K562 (cell line): ENCODE measurements at regions of chr6 and their contacts with region 1.

Region 1: DNA sequence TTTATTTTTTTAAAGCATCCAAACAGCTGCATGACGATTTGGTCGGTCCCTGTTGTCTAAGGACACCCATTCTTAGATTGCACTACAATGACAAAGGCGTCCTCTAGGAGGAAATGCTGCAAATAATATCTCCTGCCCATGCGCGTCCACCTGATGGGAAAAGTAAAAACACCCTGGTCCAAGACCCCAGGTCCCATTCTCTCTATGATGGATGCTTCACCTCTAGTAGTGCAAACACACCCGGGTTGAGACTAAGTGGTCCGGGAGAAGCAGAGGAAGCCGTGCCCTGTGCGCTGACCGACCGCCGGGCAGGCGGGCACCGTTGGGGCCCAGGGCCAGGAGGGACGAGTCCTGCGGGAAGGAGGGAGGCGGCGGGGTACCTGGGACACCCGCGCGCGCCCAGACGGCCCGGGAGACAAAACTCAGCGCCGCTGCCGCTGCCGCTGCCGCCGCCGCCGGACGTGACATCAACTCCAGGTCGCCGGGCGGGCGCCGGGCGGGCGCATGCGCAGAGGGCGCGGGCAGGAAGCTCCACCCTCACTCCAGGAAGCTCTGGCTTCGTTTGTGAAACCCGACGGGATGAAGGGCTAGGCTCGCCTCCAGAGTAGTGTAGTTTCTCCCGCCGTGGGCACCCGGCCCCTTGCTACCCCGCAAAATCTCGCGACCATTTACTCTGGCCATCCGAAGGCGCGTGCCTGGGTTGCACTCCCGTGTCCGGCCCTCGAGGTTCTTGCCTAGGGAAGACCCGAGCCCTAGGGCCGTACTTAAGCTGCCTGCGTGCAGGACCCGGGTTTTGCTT is at the start of gene TBC1D7:
- DNase-seq: peak; percentile 96 to 98 (median 98)
- ATAC-seq: peak; percentile 88
- H3K4me3 ChIP-seq: peak within 1 kb of the TSS; percentile 87
- H3K27ac ChIP-seq: peak within 1 kb of the TSS; percentile 89
- H3K4me1 ChIP-seq: peaks cover 11 to 22% of the 10 kb centered on the region in 2 experiments
- H3K27me3 ChIP-seq: no peaks in the 10 kb centered on the region; a peak in 1 of 5 replicates
- CTCF ChIP-seq: peak; percentile 15 to 37 (median 31); a peak in 3 of 6 replicates
- EP300 ChIP-seq: no peak
- POLR2A ChIP-seq: peak; percentile 93
- RAD21 ChIP-seq: peak in 1 of 2 experiments; percentile 24; a peak in 3 of 4 replicates
- polyA plus RNA-seq, gene TBC1D7: 74.5 to 86.8 TPM

Region 2: DNA sequence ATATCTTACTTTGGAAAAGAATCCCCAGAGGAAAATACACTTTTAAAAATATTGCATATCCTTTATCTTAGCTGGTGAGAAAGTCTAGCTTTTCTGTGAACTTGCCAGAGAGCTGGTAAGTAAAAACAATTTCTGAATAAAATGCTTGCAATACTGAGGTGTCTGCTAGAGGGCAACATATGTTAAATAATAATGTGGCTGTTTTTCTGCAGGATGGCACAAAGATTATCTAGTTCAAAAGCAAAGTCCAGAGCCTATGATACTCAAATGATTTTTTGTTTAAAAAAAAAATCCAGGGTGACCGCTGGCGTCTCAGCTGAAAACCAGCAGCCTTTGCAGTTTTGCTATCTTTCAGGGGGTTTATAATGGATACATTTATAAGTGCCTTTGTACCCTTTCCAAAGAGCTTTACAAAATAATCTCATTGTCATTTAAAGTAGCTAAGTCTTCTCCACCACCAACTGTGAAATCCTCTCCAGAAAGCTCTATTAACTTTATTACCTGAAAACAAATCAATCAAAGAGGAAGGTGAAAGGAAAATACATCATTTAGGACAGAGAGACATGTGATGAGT is 416.8 kb before region 1 on chr6:
- CTCF ChIA-PET with region 1: interaction called, 6 read pairs
- POLR2A ChIA-PET with region 1: interaction called, 4 read pairs
- in situ Hi-C with region 1: loop called (anchors 5 kb)
- intact Hi-C with region 1: loop called (anchors 1 kb)
- DNase-seq: peak; percentile 17 to 21 (median 19)
- ATAC-seq: no peak
- H3K4me3 ChIP-seq: no peak overlapping the region
- H3K27ac ChIP-seq: no peak overlapping the region
- H3K4me1 ChIP-seq: no peaks in the 10 kb centered on the region
- H3K27me3 ChIP-seq: peaks cover 0 to 8% of the 10 kb centered on the region in 2 experiments; a peak in 3 of 5 replicates
- CTCF ChIP-seq: peak; percentile 38 to 71 (median 47); a peak in 5 of 6 replicates
- EP300 ChIP-seq: no peak
- POLR2A ChIP-seq: no peak
- RAD21 ChIP-seq: peak; percentile 70

Region 3: DNA sequence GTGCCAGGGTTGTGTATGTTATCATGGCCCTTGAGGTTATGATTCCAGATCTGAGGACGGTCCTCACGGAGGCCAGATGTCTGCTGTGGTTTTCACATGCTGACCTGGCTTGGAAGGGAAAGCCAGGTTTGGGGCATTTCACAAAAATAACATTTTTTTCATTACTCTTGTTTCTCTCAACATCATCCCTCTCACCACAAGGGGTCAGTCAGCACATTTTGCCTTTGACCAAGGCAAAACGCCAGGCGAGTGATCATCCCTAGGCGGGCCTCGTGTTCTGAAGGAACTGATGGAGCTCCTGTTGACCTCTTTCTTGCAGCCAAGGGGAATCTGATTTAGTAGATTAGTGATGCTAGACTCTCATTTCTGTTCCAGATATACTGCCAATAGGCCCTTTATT is 133.4 kb before region 1 on chr6:
- CTCF ChIA-PET with region 1: interaction called, 21 read pairs
- POLR2A ChIA-PET with region 1: interaction called, 3 read pairs
- in situ Hi-C with region 1: loop called (anchors 5 kb)
- intact Hi-C with region 1: loop called (anchors 1 kb)
- DNase-seq: peak; percentile 58 to 84 (median 70)
- ATAC-seq: peak; percentile 90
- H3K4me3 ChIP-seq: no peak overlapping the region
- H3K27ac ChIP-seq: no peak overlapping the region
- H3K4me1 ChIP-seq: no peaks in the 10 kb centered on the region
- H3K27me3 ChIP-seq: peaks cover 12 to 17% of the 10 kb centered on the region in 2 experiments
- CTCF ChIP-seq: peak; percentile 83 to 90 (median 83)
- EP300 ChIP-seq: no peak
- POLR2A ChIP-seq: no peak
- RAD21 ChIP-seq: peak; percentile 86 to 89

Region 4: DNA sequence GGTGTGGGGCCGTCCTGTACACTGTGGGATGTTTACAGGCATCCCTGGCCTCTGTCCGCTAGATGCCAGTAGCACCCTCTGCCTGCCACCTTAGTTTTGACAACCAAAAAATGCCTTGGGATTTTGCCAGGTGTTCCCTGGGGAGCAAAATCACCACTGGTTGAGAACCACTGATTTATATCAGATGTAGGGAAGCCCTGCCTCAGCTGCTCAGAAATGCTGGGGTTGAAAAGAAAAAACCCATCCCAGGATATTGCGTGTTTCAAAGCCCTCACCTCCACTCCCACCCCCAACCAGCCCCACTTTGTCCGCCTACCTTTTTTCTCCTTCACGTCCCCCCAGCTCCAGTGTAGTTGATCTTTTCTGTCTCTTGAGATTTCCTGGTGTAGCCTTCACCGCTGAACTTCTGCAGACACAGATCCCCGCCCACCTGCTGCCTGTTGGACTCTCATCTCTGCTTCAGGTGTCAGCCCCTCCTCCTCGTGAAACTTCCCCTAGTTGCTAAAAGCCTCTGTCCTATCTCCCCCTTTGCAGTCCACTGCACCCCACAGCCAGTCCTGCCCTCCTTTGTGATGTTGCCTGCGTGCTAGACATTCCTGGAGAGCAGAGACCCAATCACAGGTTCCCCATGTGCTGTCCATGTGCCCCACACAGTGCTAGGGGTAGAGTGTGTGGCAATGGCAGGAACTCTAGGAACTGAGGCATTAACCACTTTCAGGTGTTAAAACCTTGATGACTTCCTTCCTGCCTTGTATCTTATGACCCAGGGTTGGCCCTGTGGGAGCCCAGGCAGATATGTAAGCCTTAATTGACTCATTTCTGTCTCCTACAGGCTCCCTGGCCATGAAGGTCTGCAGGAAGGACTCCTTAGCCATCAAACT is 98.8 kb before region 1 on chr6:
- CTCF ChIA-PET with region 1: interaction called, 10 read pairs
- POLR2A ChIA-PET with region 1: no interaction called
- in situ Hi-C with region 1: no loop called
- intact Hi-C with region 1: loop called (anchors 1 kb)
- DNase-seq: peak in 2 of 4 experiments; percentile 30 to 47
- ATAC-seq: peak; percentile 90
- H3K4me3 ChIP-seq: no peak overlapping the region
- H3K27ac ChIP-seq: no peak overlapping the region
- H3K4me1 ChIP-seq: no peaks in the 10 kb centered on the region
- H3K27me3 ChIP-seq: peaks cover 10 to 36% of the 10 kb centered on the region in 2 experiments; a peak in 4 of 5 replicates
- CTCF ChIP-seq: peak; percentile 62 to 74 (median 72)
- EP300 ChIP-seq: no peak
- POLR2A ChIP-seq: no peak
- RAD21 ChIP-seq: peak; percentile 67 to 79

Region 5: DNA sequence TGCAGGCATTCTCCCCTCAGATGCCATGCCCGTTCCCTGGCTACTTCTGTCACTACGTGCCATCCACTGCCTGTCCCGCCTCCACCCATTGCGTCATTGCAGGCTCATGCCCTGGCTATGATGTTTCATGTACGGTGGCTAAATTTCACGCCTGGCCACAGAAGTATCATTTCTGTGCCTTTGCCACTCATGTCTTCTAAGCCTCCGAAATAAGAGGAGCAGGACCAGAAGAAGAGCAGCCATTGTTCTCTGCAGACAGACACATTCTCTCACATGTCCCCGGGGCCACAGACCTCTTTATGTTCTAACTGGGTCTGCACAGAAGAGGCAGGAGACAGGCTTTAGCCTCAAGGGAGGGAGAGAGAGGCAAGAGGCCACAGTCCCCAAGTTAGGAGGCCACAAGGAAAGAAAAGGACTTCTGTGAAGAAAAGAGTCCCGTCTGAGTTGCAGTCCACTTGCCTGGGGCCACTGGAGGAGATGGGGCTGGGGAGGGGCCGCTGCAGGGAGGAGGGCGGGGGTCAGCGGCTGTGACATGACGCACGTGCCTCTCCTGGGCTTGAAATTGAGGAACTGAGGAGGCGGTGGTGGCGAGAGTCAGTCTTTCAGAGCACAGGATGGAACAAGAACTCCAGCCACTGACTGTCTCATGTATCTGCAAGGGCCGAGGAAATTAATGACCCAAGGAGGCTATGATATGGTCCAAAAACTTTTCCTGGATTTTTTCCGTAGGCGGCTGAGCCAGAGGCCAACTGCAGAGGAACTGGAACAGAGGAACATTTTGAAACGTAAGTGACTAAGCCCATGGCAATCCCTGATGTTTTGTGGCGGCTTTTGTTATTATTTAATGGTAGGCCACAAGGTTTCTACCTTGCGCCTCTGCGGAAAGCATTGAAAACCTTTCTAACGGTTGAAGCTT is 55.9 kb before region 1 on chr6:
- CTCF ChIA-PET with region 1: no interaction called
- POLR2A ChIA-PET with region 1: interaction called, 3 read pairs
- in situ Hi-C with region 1: no loop called
- intact Hi-C with region 1: loop called (anchors 1 kb)
- DNase-seq: peak; percentile 54 to 85 (median 64)
- ATAC-seq: peak; percentile 51
- H3K4me3 ChIP-seq: peak overlapping the region; percentile 47
- H3K27ac ChIP-seq: peak overlapping the region; percentile 92
- H3K4me1 ChIP-seq: peaks cover 25 to 39% of the 10 kb centered on the region in 2 experiments
- H3K27me3 ChIP-seq: no peaks in the 10 kb centered on the region
- CTCF ChIP-seq: no peak
- EP300 ChIP-seq: no peak; the same call in 1 of the 2 replicates
- POLR2A ChIP-seq: peak; percentile 60; the same call in 1 of the 2 replicates
- RAD21 ChIP-seq: peak; percentile 10 to 36; a peak in 1 of 4 replicates